ENCODE measurements at regions of chr7 and their contacts with region 1.

Region 1: GRCh38 chr7:8365503-8366110 is 67.8 kb upstream of the NXPH1 start:
- DNase-seq: peak in 1 of 10 donors; percentile 26

Region 2: DNA sequence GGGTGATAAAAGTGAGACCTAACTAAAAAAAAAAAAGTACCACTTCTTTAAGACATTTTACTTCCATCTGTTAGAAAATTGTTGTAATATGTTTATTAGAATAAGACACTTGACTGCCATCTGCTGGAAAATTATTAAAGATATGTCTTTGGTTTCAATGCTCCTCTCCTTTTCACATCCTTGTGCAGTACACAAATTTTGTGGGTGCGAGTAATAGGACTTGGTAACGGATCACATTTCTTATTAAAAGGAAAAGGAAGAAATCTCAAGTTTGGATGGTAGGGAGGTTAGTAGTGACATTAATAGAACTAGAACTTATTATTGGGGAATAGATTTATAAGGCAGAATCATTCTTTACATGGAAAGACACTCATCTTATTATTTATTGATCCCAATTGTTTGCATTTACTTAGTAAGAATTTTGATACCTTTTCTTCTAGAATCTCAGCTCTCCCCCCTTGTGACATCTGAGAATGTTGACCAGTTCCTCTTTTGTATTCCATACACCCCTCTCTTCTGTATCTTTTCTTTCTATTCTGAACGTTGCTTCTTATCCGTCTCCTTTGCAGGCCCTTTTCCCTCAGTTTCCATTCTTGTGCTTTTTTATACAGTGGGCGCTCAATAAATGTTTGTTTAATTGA is 604.1 kb before region 1 on chr7:
- intact Hi-C with region 1: no loop called
- DNase-seq: no peak

Region 3: GRCh38 chr7:8310876-8311275 is 54.7 kb before region 1 on chr7:
- intact Hi-C with region 1: loop called (anchors 2 kb)
- DNase-seq: no peak

Region 4: GRCh38 chr7:9608560-9608959 is 1243.0 kb after region 1 on chr7:
- intact Hi-C with region 1: no loop called
- DNase-seq: no peak